ENCODE measurements at regions of chr3 and their contacts with region 1.

Region 1: DNA sequence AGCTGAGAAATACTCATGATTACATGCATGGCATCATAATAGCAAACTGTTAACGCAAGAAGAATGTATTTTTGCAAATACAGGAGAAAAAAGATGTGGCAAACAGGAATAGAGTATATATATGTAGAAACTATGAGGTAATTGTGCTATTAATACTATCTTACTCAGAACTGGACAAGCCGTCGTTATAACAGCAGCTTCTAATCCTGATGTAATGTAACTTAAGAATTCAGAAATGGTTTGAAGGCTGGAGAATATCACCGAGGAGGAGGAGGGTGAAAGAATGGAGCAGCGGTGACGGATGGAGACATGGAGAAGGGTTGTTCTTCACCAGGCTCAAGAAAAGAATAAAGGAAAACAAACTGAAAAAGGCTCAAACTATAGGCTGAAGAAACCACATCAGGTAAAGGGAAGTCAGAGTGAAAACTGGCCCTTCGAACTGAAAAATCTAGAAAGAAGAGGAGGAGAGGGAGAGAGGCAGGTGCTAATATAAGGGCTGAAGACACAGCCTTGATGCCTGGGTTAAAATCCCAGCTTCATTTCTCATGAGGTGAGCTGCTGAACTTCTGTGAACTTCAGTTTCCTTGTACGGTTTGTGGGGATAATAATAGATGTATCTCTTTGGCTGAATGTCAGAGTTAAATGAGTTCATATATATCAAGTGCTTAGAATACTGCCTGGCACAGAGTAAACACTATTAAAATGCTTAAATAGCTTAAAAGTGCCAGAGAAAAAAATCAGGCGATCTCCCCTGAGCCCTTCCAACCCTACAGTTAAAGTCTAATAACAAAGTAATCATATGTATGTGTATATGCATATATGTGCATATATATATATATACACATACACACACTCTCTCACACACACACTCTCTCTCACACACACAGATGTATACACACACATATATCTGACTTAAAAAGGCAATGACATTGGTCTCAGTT is 43.9 kb downstream of the GOLIM4 start:
- DNase-seq: no peak
- H3K4me3 ChIP-seq: peak overlapping the region in 2 of 4 donors; percentile 7 to 8
- H3K27ac ChIP-seq: peak overlapping the region; percentile 46 to 69 (median 60)
- H3K4me1 ChIP-seq: peaks cover 32 to 46% (median 42%) of the 10 kb centered on the region in 4 donors
- H3K27me3 ChIP-seq: no peaks in the 10 kb centered on the region
- CTCF ChIP-seq: no peak
- EP300 ChIP-seq: no peak
- POLR2A ChIP-seq: no peak

Region 2: DNA sequence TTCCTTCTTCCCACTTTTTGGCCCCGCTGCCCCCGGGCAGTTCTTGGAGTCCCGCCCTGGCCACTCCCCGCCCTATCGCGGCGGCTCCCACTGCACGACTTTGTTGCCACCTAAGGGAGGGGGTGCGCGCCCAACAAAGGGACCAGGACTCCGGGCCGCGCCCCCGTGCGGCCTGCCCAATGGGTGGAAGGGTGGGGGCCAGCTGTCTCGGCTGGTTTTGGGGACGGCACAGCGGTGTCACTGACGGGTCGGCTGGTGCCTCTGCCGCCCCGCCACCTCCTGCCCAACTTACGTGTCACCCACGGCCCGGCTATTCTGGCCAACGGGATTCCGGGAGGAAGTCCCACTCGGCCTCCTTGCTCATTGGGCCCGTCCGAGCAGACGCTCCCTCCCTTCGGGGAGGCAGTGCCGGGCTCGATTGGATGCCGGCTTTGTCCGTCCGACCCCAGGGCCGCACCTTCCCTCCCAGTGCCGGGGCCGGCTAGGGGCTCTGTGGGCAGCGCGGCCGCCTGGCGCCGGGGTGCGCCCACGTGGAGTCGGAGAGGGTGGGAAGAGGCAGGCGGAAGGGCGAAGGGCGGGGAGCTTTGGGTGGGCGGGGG is 43.9 kb after region 1 on chr3 and contains the start of gene GOLIM4:
- intact Hi-C with region 1: loop called (anchors 2 kb)
- DNase-seq: peak; percentile 96
- H3K4me3 ChIP-seq: peak within 1 kb of the TSS; percentile 66 to 93 (median 91)
- H3K27ac ChIP-seq: peak within 1 kb of the TSS; percentile 92 to 98 (median 98)
- H3K4me1 ChIP-seq: peaks cover 38 to 48% (median 45%) of the 10 kb centered on the region in 4 donors
- H3K27me3 ChIP-seq: no peaks in the 10 kb centered on the region
- CTCF ChIP-seq: no peak
- EP300 ChIP-seq: no peak
- POLR2A ChIP-seq: peak; percentile 74
- total RNA-seq, gene GOLIM4: 41.7 to 46.5 (median 45.0) TPM